Esophagus squamous epithelium (tissue), 5 donors: ENCODE measurements at regions of chr16 and their contacts with region 1.

Region 1: DNA sequence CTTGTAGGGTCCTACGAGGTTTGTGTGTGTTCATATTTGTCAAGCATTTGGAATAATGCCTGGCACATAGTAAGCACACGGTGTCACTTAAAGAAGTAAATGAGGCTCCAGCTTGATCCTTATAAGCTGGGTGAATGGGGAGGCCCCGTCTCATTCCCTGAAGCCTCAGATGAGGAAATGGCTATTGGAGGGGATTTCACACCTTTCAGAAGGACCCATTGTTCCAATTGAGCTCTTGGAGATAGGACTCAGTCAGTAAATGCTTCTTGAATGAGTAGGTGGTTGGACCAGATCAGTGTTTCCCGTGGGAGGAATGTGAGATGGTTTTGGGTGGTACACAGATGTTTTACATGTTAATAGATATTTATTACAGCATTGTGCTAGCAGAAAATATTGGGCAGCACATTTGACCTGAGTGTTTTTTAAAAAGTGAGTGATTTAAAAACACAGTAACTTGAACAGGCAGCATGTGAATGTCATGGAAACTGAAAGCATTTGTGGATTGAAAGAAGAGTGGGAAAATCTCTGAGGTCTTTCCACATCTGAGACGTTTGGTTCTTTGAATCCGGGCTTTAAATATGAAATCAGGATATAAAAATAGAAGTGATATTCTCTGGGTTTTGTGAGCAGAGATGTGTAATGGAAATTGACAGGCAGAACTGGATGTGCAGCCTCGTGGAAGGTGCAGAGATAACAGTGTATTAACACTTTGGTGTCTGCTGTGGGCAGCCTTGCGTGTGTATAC is 36.4 kb upstream of the ARHGAP17 start:
- DNase-seq: no peak
- H3K4me3 ChIP-seq: peak overlapping the region in 2 of 4 donors; percentile 3 to 40
- H3K27ac ChIP-seq: peak overlapping the region; percentile 59 to 93 (median 71)
- H3K4me1 ChIP-seq: peaks cover 18 to 63% (median 41%) of the 10 kb centered on the region in 3 donors
- H3K27me3 ChIP-seq: no peaks in the 10 kb centered on the region
- CTCF ChIP-seq: no peak
- POLR2A ChIP-seq: no peak

Region 2: DNA sequence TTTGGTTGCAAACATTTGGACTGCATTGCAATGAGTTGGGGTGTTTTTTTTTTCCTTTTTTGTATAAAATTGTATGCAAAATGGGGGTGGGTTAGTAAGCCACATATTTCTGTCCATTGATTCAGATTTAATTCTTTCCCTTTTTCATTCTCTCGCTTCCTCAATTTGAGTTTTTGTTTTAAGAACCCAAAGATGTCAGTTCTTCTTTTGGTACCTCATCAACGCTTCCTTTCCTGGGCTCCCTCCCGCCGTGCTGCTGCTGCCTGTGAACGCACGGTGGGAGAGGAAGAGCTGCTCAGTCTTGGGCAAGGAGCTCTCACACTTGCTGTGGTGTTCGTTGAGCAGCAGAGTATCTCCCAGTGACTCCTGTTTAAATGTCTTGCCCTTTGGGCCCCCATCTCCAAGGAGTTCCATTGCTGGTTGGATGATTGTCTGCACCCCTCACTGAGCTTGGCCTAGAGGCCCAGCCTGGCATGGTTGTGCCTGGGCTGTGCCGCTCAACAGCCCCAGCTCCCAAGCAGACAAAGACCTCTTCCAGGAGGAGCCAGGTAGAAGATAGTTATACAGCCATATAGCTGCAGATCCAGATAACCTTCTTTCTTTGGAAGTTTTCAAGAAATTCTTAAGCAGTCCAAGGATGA is 1480.5 kb before region 1 on chr16:
- intact Hi-C with region 1: no loop called
- DNase-seq: no peak
- H3K4me3 ChIP-seq: no peak overlapping the region
- H3K27ac ChIP-seq: no peak overlapping the region
- H3K4me1 ChIP-seq: no peaks in the 10 kb centered on the region
- H3K27me3 ChIP-seq: no peaks in the 10 kb centered on the region
- CTCF ChIP-seq: no peak
- POLR2A ChIP-seq: no peak

Region 3: GRCh38 chr16:24635900-24636610 is 415.5 kb before region 1 on chr16:
- intact Hi-C with region 1: no loop called
- DNase-seq: no peak
- H3K4me3 ChIP-seq: no peak overlapping the region
- H3K27ac ChIP-seq: no peak overlapping the region
- H3K4me1 ChIP-seq: peaks cover 0 to 14% (median 12%) of the 10 kb centered on the region in 3 donors
- H3K27me3 ChIP-seq: no peaks in the 10 kb centered on the region
- CTCF ChIP-seq: no peak
- POLR2A ChIP-seq: no peak

Region 4: GRCh38 chr16:25126820-25127232 is 75.2 kb after region 1 on chr16:
- intact Hi-C with region 1: no loop called
- DNase-seq: no peak
- H3K4me3 ChIP-seq: no peak overlapping the region
- H3K27ac ChIP-seq: no peak overlapping the region
- H3K4me1 ChIP-seq: peaks cover 0 to 10% (median 0%) of the 10 kb centered on the region in 3 donors
- H3K27me3 ChIP-seq: no peaks in the 10 kb centered on the region
- CTCF ChIP-seq: peak; percentile 19 to 73 (median 46)
- POLR2A ChIP-seq: no peak

Region 5: GRCh38 chr16:25224731-25225319 is 173.2 kb after region 1 on chr16:
- intact Hi-C with region 1: loop called (anchors 5 kb)
- DNase-seq: no peak
- H3K4me3 ChIP-seq: no peak overlapping the region
- H3K27ac ChIP-seq: no peak overlapping the region
- H3K4me1 ChIP-seq: peaks cover 0 to 7% (median 0%) of the 10 kb centered on the region in 3 donors
- H3K27me3 ChIP-seq: no peaks in the 10 kb centered on the region
- CTCF ChIP-seq: no peak
- POLR2A ChIP-seq: no peak